ENCODE measurements at regions of chr2 and their contacts with region 1.

Region 1: GRCh38 chr2:80326214-80326613 is 21.7 kb upstream of the LRRTM1 start:
- DNase-seq: peak; percentile 17
- ATAC-seq: peak; percentile 75
- H3K4me3 ChIP-seq: no peak overlapping the region
- H3K27ac ChIP-seq: no peak overlapping the region
- H3K4me1 ChIP-seq: no peaks in the 10 kb centered on the region; the same call in 1 of the 2 replicates
- H3K27me3 ChIP-seq: peaks cover 0 to 6% of the 10 kb centered on the region in 2 experiments; a peak in 2 of 4 replicates
- CTCF ChIP-seq: peak; percentile 33 to 65 (median 43); a peak in 4 of 6 replicates
- EP300 ChIP-seq: no peak
- POLR2A ChIP-seq: no peak
- RAD21 ChIP-seq: peak; percentile 64

Region 2: DNA sequence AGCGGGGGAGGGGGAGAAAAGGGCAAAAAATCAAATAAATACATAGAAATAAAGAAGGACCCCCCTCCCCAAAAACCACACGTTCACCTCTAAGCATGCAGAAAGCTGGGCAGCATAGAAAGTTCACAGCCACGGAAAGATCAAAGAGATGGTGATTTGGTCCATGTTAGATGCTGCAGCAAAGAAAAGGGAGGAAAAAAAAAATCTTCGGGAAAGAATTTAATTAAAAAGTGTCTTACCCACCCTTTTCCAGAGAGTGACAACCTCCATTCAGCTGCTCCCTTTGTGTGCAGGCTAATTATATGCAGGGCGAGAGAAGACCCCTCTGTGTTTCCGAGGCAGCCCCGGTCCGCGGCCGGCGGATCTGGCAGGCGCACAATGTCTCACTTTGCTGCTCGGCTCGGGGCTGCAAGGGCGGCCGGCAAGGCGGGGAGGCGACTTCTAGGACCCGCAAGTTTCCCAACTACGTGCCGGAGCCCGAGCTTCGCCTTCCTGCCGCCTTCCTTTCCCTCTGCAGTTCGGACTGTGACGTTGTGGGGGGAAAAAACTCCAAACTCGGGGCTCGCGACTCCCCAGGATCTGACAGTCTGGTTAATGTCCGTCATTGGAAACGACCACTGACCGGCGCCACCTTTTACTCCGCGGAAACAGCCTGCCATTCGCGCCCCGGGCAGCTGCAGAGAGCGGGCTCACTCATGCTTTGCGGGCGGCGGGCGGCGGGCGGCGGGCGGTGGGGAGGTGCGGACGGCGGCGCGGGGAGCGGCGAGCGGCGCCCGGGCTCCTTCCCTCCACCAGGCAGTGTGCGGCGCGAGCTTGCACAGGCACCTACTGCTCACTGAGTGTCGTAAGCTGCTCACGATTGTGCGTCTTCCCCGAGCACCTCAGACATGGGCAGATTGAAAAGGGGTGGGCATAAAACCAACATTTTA is 22.0 kb before region 1 on chr2 and contains the start of gene LRRTM1:
- CTCF ChIA-PET with region 1: interaction called, 17 read pairs
- POLR2A ChIA-PET with region 1: interaction called, 4 read pairs
- RAD21 ChIA-PET with region 1: no interaction called
- SMC1A ChIA-PET with region 1: interaction called, 5 read pairs
- in situ Hi-C with region 1: no loop called
- intact Hi-C with region 1: no loop called
- DNase-seq: no peak
- ATAC-seq: no peak
- H3K4me3 ChIP-seq: no peak within 1 kb of the TSS
- H3K27ac ChIP-seq: no peak within 1 kb of the TSS
- H3K4me1 ChIP-seq: no peaks in the 10 kb centered on the region
- H3K27me3 ChIP-seq: peaks cover 4 to 8% of the 10 kb centered on the region in 2 experiments; a peak in 3 of 4 replicates
- CTCF ChIP-seq: no peak
- EP300 ChIP-seq: no peak
- POLR2A ChIP-seq: no peak
- RAD21 ChIP-seq: no peak
- polyA plus RNA-seq, gene LRRTM1: not detected

Region 3: DNA sequence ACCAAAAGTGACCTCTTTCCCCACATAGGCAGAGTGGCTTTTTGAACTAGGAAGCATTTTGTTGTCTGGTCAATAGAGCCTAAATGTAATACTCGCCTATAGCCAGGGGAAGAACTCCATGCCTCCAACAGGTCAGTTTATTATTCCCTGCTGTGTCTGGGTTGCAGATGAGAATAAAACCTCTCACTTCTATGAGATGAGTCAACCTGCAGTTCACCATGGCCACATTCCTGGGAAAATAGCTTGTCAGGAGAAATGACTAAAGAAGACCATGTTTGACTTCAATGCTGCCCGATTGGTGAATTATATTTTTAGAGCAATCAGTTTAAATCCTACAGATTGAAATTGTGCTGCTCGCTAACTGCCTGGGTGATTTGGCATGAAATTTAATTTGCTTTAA is 25.0 kb after region 1 on chr2:
- CTCF ChIA-PET with region 1: interaction called, 14 read pairs
- POLR2A ChIA-PET with region 1: no interaction called
- RAD21 ChIA-PET with region 1: interaction called, 13 read pairs
- SMC1A ChIA-PET with region 1: interaction called, 10 read pairs
- in situ Hi-C with region 1: no loop called
- intact Hi-C with region 1: no loop called
- DNase-seq: no peak
- ATAC-seq: no peak; the same call in 1 of the 3 replicates
- H3K4me3 ChIP-seq: no peak overlapping the region
- H3K27ac ChIP-seq: no peak overlapping the region
- H3K4me1 ChIP-seq: no peaks in the 10 kb centered on the region
- H3K27me3 ChIP-seq: no peaks in the 10 kb centered on the region
- CTCF ChIP-seq: no peak
- EP300 ChIP-seq: no peak
- POLR2A ChIP-seq: no peak
- RAD21 ChIP-seq: no peak

Region 4: GRCh38 chr2:80454628-80455027 is 128.4 kb after region 1 on chr2:
- CTCF ChIA-PET with region 1: interaction called, 7 read pairs
- POLR2A ChIA-PET with region 1: interaction called, 3 read pairs
- RAD21 ChIA-PET with region 1: interaction called, 8 read pairs
- SMC1A ChIA-PET with region 1: interaction called, 35 read pairs
- in situ Hi-C with region 1: no loop called
- intact Hi-C with region 1: no loop called
- DNase-seq: no peak
- ATAC-seq: peak; percentile 41
- H3K4me3 ChIP-seq: no peak overlapping the region
- H3K27ac ChIP-seq: no peak overlapping the region
- H3K4me1 ChIP-seq: 0 out of 2 replicates have a peak, but pooled peaks cover 1% of the 10 kb centered on the region
- H3K27me3 ChIP-seq: no peaks in the 10 kb centered on the region; a peak in 1 of 4 replicates
- CTCF ChIP-seq: no peak
- EP300 ChIP-seq: no peak
- POLR2A ChIP-seq: no peak
- RAD21 ChIP-seq: no peak

Region 5: DNA sequence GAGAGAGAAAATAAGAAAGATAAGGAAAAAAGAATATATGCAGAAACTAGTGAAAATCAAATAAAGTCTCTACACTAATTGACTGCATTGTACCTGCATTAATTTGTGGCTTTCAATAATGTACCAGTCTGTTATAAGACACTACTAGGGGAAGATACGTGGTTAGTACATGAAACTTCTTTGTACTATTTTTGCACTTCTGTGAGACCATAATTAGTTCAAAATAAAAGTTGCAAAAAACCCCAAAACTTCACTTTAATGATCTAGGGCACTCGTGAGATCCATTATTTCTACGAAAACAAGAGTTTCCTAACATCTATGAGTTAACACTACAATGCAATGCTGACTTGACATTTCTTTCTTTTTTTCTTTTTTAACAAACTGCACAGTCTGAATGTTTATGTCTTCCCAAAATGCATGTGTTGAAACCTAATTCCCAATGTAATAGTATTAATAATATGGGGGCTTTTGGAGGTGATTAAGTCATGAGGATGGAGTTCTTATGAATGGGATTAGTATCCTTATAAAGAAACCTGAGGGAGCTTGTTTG is 141.1 kb after region 1 on chr2:
- CTCF ChIA-PET with region 1: interaction called, 8 read pairs
- POLR2A ChIA-PET with region 1: interaction called, 3 read pairs
- RAD21 ChIA-PET with region 1: interaction called, 29 read pairs
- SMC1A ChIA-PET with region 1: interaction called, 41 read pairs
- in situ Hi-C with region 1: no loop called
- intact Hi-C with region 1: loop called (anchors 10 kb)
- DNase-seq: no peak
- ATAC-seq: peak; percentile 35
- H3K4me3 ChIP-seq: no peak overlapping the region
- H3K27ac ChIP-seq: peak overlapping the region; percentile 44
- H3K4me1 ChIP-seq: peaks cover 5% of the 10 kb centered on the region
- H3K27me3 ChIP-seq: no peaks in the 10 kb centered on the region
- CTCF ChIP-seq: no peak
- EP300 ChIP-seq: peak in 1 of 2 experiments; percentile 66; a peak in 2 of 4 replicates
- POLR2A ChIP-seq: no peak
- RAD21 ChIP-seq: no peak

Region 6: GRCh38 chr2:80525152-80525551 is 198.9 kb after region 1 on chr2:
- CTCF ChIA-PET with region 1: interaction called, 20 read pairs
- POLR2A ChIA-PET with region 1: interaction called, 3 read pairs
- RAD21 ChIA-PET with region 1: interaction called, 16 read pairs
- SMC1A ChIA-PET with region 1: interaction called, 32 read pairs
- in situ Hi-C with region 1: no loop called
- intact Hi-C with region 1: loop called (anchors 1 kb)
- DNase-seq: peak; percentile 83
- ATAC-seq: peak; percentile 77
- H3K4me3 ChIP-seq: 0 out of 2 replicates have a peak overlapping the region, but pooled peaks have one; percentile 19
- H3K27ac ChIP-seq: peak overlapping the region; percentile 92
- H3K4me1 ChIP-seq: peaks cover 48% of the 10 kb centered on the region
- H3K27me3 ChIP-seq: no peaks in the 10 kb centered on the region
- CTCF ChIP-seq: no peak
- EP300 ChIP-seq: peak; percentile 57 to 76; a peak in 3 of 4 replicates
- POLR2A ChIP-seq: 0 out of 2 replicates have a peak, but pooled peaks have one; percentile 23
- RAD21 ChIP-seq: no peak

Region 7: GRCh38 chr2:80852808-80853139 is 526.6 kb after region 1 on chr2:
- CTCF ChIA-PET with region 1: interaction called, 3 read pairs
- POLR2A ChIA-PET with region 1: no interaction called
- RAD21 ChIA-PET with region 1: interaction called, 4 read pairs
- SMC1A ChIA-PET with region 1: interaction called, 5 read pairs
- in situ Hi-C with region 1: no loop called
- intact Hi-C with region 1: loop called (anchors 10 kb)
- DNase-seq: no peak
- ATAC-seq: peak; percentile 73
- H3K4me3 ChIP-seq: no peak overlapping the region
- H3K27ac ChIP-seq: no peak overlapping the region
- H3K4me1 ChIP-seq: no peaks in the 10 kb centered on the region
- H3K27me3 ChIP-seq: no peaks in the 10 kb centered on the region
- CTCF ChIP-seq: peak; percentile 12 to 31 (median 25); a peak in 3 of 6 replicates
- EP300 ChIP-seq: no peak
- POLR2A ChIP-seq: no peak
- RAD21 ChIP-seq: peak; percentile 34

Measured in GM12878 (cell line).